K562 (cell line): ENCODE measurements at regions of chr3 and their contacts with region 1.

Region 1: GRCh38 chr3:10945683-10946287 is 46.8 kb upstream of the SLC6A1 start:
- DNase-seq: peak; percentile 79 to 92 (median 86)
- ATAC-seq: peak; percentile 99
- H3K4me3 ChIP-seq: no peak overlapping the region
- H3K27ac ChIP-seq: no peak overlapping the region
- H3K4me1 ChIP-seq: no peaks in the 10 kb centered on the region; a peak in 1 of 5 replicates
- H3K27me3 ChIP-seq: peaks cover 0 to 26% of the 10 kb centered on the region in 2 experiments; a peak in 2 of 5 replicates
- CTCF ChIP-seq: peak; percentile 85 to 92 (median 91)
- EP300 ChIP-seq: no peak
- POLR2A ChIP-seq: no peak
- RAD21 ChIP-seq: peak; percentile 65 to 86

Region 2: GRCh38 chr3:11010426-11011165 is 64.8 kb after region 1 on chr3:
- CTCF ChIA-PET with region 1: no interaction called
- POLR2A ChIA-PET with region 1: no interaction called
- in situ Hi-C with region 1: no loop called
- intact Hi-C with region 1: no loop called
- DNase-seq: no peak
- ATAC-seq: no peak
- H3K4me3 ChIP-seq: no peak overlapping the region
- H3K27ac ChIP-seq: no peak overlapping the region
- H3K4me1 ChIP-seq: no peaks in the 10 kb centered on the region
- H3K27me3 ChIP-seq: peaks cover 43 to 76% of the 10 kb centered on the region in 2 experiments
- CTCF ChIP-seq: no peak
- EP300 ChIP-seq: no peak
- POLR2A ChIP-seq: no peak
- RAD21 ChIP-seq: no peak

Region 3: DNA sequence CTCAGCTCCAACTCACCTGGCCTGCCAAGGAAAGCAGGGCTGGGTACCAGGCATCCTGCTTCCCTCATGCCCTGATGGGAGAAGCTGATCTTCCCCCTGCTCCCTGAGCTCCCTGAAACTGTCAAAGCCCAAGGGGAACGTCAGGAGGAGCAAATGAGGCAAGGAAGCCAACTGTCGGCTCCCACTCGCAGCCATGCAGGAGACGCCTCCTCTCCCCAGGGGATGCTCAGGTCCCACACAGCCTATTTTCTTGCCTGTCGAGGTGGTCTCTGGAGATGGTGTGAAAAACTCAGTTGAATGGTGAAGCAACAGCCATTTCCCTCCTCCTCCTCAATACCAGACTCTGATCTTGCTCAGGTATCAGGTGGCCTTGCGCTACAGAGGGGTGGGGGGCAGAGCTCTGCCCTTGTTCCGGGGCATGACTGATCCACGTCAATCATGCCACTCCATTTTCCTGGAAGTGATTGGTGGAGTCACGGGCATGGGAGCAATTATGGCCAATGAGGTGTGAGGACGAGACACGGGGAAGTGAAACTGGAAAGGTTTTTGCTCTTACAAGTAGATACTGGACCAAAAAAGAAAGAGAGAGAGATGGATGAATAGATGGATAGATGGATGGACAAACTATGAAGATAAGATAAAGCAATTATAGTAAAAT is 105.0 kb after region 1 on chr3:
- CTCF ChIA-PET with region 1: no interaction called
- POLR2A ChIA-PET with region 1: no interaction called
- in situ Hi-C with region 1: loop called (anchors 5 kb)
- intact Hi-C with region 1: no loop called
- DNase-seq: no peak
- ATAC-seq: no peak
- H3K4me3 ChIP-seq: no peak overlapping the region
- H3K27ac ChIP-seq: no peak overlapping the region
- H3K4me1 ChIP-seq: no peaks in the 10 kb centered on the region
- H3K27me3 ChIP-seq: peaks cover 12 to 31% of the 10 kb centered on the region in 2 experiments; a peak in 4 of 5 replicates
- CTCF ChIP-seq: no peak
- EP300 ChIP-seq: no peak
- POLR2A ChIP-seq: no peak
- RAD21 ChIP-seq: no peak

Region 4: GRCh38 chr3:11060500-11061251 is 114.9 kb after region 1 on chr3:
- CTCF ChIA-PET with region 1: interaction called, 15 read pairs
- POLR2A ChIA-PET with region 1: no interaction called
- in situ Hi-C with region 1: no loop called
- intact Hi-C with region 1: loop called (anchors 1 kb)
- DNase-seq: peak; percentile 53 to 77 (median 70)
- ATAC-seq: peak; percentile 92
- H3K4me3 ChIP-seq: no peak overlapping the region
- H3K27ac ChIP-seq: no peak overlapping the region
- H3K4me1 ChIP-seq: peaks cover 0 to 10% of the 10 kb centered on the region in 2 experiments; a peak in 2 of 5 replicates
- H3K27me3 ChIP-seq: peaks cover 0 to 19% of the 10 kb centered on the region in 2 experiments; a peak in 2 of 5 replicates
- CTCF ChIP-seq: peak; percentile 71 to 87 (median 82)
- EP300 ChIP-seq: no peak
- POLR2A ChIP-seq: no peak
- RAD21 ChIP-seq: peak; percentile 66 to 79